ENCODE measurements at regions of chr5 and their contacts with region 1.

Region 1: GRCh38 chr5:19608444-19609002 is 379.5 kb downstream of the CDH18 start:
- DNase-seq: no peak
- ATAC-seq: no peak
- H3K4me3 Mint-ChIP-seq: no peak overlapping the region
- H3K27ac Mint-ChIP-seq: no peak overlapping the region
- H3K4me1 Mint-ChIP-seq: no peaks in the 10 kb centered on the region
- H3K27me3 Mint-ChIP-seq: no peaks in the 10 kb centered on the region
- CTCF ChIP-seq: no peak

Region 2: DNA sequence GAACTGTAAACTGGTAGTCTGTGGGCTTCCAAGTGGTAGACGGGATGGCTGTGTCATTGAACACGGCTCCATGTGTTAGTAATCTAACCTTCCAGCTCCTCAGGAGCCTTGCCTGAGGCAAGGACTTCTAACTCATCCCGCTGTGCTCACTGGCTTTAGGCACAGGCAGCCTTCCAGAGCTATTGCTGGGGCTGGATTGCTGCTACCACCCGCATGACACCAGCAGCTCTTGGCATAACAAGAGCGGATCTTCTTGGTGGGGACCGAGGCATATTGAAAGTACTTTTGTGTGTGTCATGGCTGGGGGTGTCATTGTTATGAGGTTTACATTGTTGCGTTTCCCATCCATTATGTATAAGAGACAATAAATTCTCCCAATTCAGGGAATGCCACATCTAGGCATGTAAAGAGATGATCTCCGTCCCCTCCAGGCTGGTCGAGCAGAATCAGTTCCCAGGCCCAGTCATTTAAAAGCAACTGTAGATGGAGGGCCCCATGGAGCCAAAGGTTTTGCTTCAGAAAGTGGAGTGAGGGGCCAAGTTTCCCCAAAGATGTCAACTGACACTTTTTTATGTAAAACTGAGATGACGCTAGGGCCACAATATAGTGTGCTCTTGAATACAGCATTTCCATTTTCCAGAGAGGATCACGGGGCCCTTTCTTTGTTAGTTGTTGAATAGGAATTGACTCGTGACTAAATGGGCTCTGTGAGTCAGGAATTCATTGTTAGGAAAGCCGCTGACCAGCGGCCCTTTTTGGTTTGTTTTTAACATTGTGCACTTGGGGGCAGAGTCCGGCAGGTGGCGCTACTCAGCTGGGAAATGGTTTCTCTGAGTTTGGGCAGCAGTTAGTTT is 1214.7 kb before region 1 on chr5:
- CTCF ChIA-PET with region 1: no interaction called
- POLR2A ChIA-PET with region 1: no interaction called
- intact Hi-C with region 1: loop called (anchors 1 kb)
- DNase-seq: peak; percentile 38
- ATAC-seq: peak; percentile 56
- H3K4me3 Mint-ChIP-seq: no peak overlapping the region
- H3K27ac Mint-ChIP-seq: no peak overlapping the region
- H3K4me1 Mint-ChIP-seq: no peaks in the 10 kb centered on the region
- H3K27me3 Mint-ChIP-seq: no peaks in the 10 kb centered on the region
- CTCF ChIP-seq: peak; percentile 66

Region 3: GRCh38 chr5:18465833-18466591 is 1142.5 kb before region 1 on chr5:
- CTCF ChIA-PET with region 1: interaction called, 5 read pairs
- POLR2A ChIA-PET with region 1: no interaction called
- intact Hi-C with region 1: loop called (anchors 1 kb)
- DNase-seq: no peak
- ATAC-seq: peak; percentile 65
- H3K4me3 Mint-ChIP-seq: no peak overlapping the region
- H3K27ac Mint-ChIP-seq: no peak overlapping the region
- H3K4me1 Mint-ChIP-seq: no peaks in the 10 kb centered on the region
- H3K27me3 Mint-ChIP-seq: no peaks in the 10 kb centered on the region
- CTCF ChIP-seq: peak; percentile 89

Region 4: GRCh38 chr5:19531374-19531952 is 77.1 kb before region 1 on chr5:
- CTCF ChIA-PET with region 1: no interaction called
- POLR2A ChIA-PET with region 1: no interaction called
- intact Hi-C with region 1: no loop called
- DNase-seq: no peak
- ATAC-seq: no peak
- H3K4me3 Mint-ChIP-seq: no peak overlapping the region
- H3K27ac Mint-ChIP-seq: no peak overlapping the region
- H3K4me1 Mint-ChIP-seq: no peaks in the 10 kb centered on the region
- H3K27me3 Mint-ChIP-seq: no peaks in the 10 kb centered on the region
- CTCF ChIP-seq: no peak

Measured in activated B cell treated with CpG ODN at 0.5 μM for 24 hours (primary cell).